CD4-positive, alpha-beta T cell (primary cell): ENCODE measurements at regions of chr7 and their contacts with region 1.

Region 1: DNA sequence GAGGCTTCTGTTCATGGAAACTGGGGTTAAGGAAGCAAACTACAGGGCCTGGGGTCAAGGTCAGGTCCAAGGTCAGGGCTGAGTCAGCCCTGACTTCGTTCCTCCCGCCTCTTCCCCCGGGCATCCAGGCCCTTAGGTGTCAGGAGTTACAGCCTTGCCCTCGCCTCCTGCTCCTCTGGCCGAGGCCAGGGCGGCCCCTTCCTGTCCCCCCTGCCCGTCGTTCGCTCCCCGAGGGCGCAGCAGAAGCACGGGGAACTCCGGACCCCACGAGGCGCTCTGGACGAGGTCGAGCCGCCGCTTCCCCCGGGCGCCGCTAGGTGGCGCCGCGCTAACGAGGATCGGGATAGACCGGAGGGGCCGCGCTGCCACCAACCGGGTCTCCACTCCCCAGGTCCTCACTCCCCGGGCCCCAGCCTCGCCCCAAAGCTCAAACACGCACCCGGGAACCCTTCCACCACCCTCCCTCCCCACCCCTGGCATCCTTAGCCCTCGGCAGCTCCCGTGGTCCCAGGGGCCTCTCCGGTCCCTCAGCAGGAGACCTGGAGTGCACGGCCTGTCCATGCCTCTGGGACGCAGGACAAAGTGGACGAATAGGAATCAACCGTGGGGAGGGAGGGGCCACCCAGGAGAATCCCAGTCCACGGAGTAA is 59.2 kb upstream of the MYL10 start:
- DNase-seq: peak; percentile 59 to 87 (median 76)
- ATAC-seq: peak; percentile 81
- H3K4me3 ChIP-seq: peak overlapping the region; percentile 2
- H3K4me3 Mint-ChIP-seq: no peak overlapping the region
- H3K27ac ChIP-seq: no peak overlapping the region
- H3K27ac Mint-ChIP-seq: no peak overlapping the region
- H3K4me1 ChIP-seq: peaks cover 8% of the 10 kb centered on the region
- H3K4me1 Mint-ChIP-seq: no peaks in the 10 kb centered on the region
- H3K27me3 ChIP-seq: no peaks in the 10 kb centered on the region
- H3K27me3 Mint-ChIP-seq: no peaks in the 10 kb centered on the region
- CTCF ChIP-seq: peak; percentile 95

Region 2: GRCh38 chr7:101542527-101543241 is 145.6 kb before region 1 on chr7:
- CTCF ChIA-PET with region 1: no interaction called
- POLR2A ChIA-PET with region 1: no interaction called
- intact Hi-C with region 1: loop called (anchors 2 to 5 kb)
- DNase-seq: peak; percentile 61 to 81 (median 72)
- ATAC-seq: peak; percentile 49
- H3K4me3 ChIP-seq: no peak overlapping the region
- H3K4me3 Mint-ChIP-seq: no peak overlapping the region
- H3K27ac ChIP-seq: no peak overlapping the region
- H3K27ac Mint-ChIP-seq: no peak overlapping the region
- H3K4me1 ChIP-seq: peaks cover 4% of the 10 kb centered on the region
- H3K4me1 Mint-ChIP-seq: no peaks in the 10 kb centered on the region
- H3K27me3 ChIP-seq: peaks cover 0 to 3% of the 10 kb centered on the region in 2 experiments
- H3K27me3 Mint-ChIP-seq: peaks cover 4% of the 10 kb centered on the region
- CTCF ChIP-seq: peak; percentile 88

Region 3: GRCh38 chr7:101743241-101743994 is 55.1 kb after region 1 on chr7:
- CTCF ChIA-PET with region 1: interaction called, 3 read pairs
- POLR2A ChIA-PET with region 1: interaction called, 3 read pairs
- intact Hi-C with region 1: loop called in 1 of 2 experiments (anchors 5 kb)
- DNase-seq: peak; percentile 42 to 78 (median 62)
- ATAC-seq: peak; percentile 87
- H3K4me3 ChIP-seq: peak overlapping the region; percentile 57
- H3K4me3 Mint-ChIP-seq: peak overlapping the region; percentile 83
- H3K27ac ChIP-seq: no peak overlapping the region
- H3K27ac Mint-ChIP-seq: no peak overlapping the region
- H3K4me1 ChIP-seq: peaks cover 30% of the 10 kb centered on the region
- H3K4me1 Mint-ChIP-seq: peaks cover 6% of the 10 kb centered on the region
- H3K27me3 ChIP-seq: peaks cover 0 to 2% of the 10 kb centered on the region in 2 experiments
- H3K27me3 Mint-ChIP-seq: no peaks in the 10 kb centered on the region
- CTCF ChIP-seq: peak; percentile 71

Region 4: GRCh38 chr7:101815835-101816493 is 127.7 kb after region 1 on chr7:
- CTCF ChIA-PET with region 1: no interaction called
- POLR2A ChIA-PET with region 1: no interaction called
- intact Hi-C with region 1: loop called (anchors 1 to 2 kb)
- DNase-seq: peak; percentile 48 to 89 (median 64)
- ATAC-seq: peak; percentile 81
- H3K4me3 ChIP-seq: peak overlapping the region; percentile 57
- H3K4me3 Mint-ChIP-seq: peak overlapping the region; percentile 90
- H3K27ac ChIP-seq: no peak overlapping the region
- H3K27ac Mint-ChIP-seq: peak overlapping the region; percentile 51
- H3K4me1 ChIP-seq: peaks cover 16% of the 10 kb centered on the region
- H3K4me1 Mint-ChIP-seq: peaks cover 35% of the 10 kb centered on the region
- H3K27me3 ChIP-seq: no peaks in the 10 kb centered on the region
- H3K27me3 Mint-ChIP-seq: peaks cover 5% of the 10 kb centered on the region
- CTCF ChIP-seq: no peak

Region 5: GRCh38 chr7:102236592-102237287 is 548.4 kb after region 1 on chr7:
- CTCF ChIA-PET with region 1: no interaction called
- POLR2A ChIA-PET with region 1: no interaction called
- intact Hi-C with region 1: loop called in 1 of 2 experiments (anchors 1 kb)
- DNase-seq: peak; percentile 2 to 60 (median 29)
- ATAC-seq: no peak
- H3K4me3 ChIP-seq: no peak overlapping the region
- H3K4me3 Mint-ChIP-seq: no peak overlapping the region
- H3K27ac ChIP-seq: no peak overlapping the region
- H3K27ac Mint-ChIP-seq: no peak overlapping the region
- H3K4me1 ChIP-seq: no peaks in the 10 kb centered on the region
- H3K4me1 Mint-ChIP-seq: no peaks in the 10 kb centered on the region
- H3K27me3 ChIP-seq: no peaks in the 10 kb centered on the region
- H3K27me3 Mint-ChIP-seq: no peaks in the 10 kb centered on the region
- CTCF ChIP-seq: peak; percentile 52

Region 6: GRCh38 chr7:102272075-102272917 is 584.0 kb after region 1 on chr7:
- CTCF ChIA-PET with region 1: no interaction called
- POLR2A ChIA-PET with region 1: no interaction called
- intact Hi-C with region 1: loop called in 1 of 2 experiments (anchors 1 kb)
- DNase-seq: peak; percentile 61 to 84 (median 72)
- ATAC-seq: peak; percentile 68
- H3K4me3 ChIP-seq: no peak overlapping the region
- H3K4me3 Mint-ChIP-seq: no peak overlapping the region
- H3K27ac ChIP-seq: no peak overlapping the region
- H3K27ac Mint-ChIP-seq: no peak overlapping the region
- H3K4me1 ChIP-seq: peaks cover 4% of the 10 kb centered on the region
- H3K4me1 Mint-ChIP-seq: no peaks in the 10 kb centered on the region
- H3K27me3 ChIP-seq: no peaks in the 10 kb centered on the region
- H3K27me3 Mint-ChIP-seq: no peaks in the 10 kb centered on the region
- CTCF ChIP-seq: peak; percentile 94